Activated CD8-positive, alpha-beta T cell treated with anti-CD3 and anti-CD28 coated beads for 36 hours (primary cell): ENCODE measurements at regions of chr2 and their contacts with region 1.

Region 1: GRCh38 chr2:172131713-172132555 is 29.2 kb upstream of the DLX2 start:
- DNase-seq: no peak
- ATAC-seq: no peak
- H3K4me3 Mint-ChIP-seq: no peak overlapping the region
- H3K27ac Mint-ChIP-seq: no peak overlapping the region
- H3K4me1 Mint-ChIP-seq: no peaks in the 10 kb centered on the region
- H3K27me3 Mint-ChIP-seq: peaks cover 3% of the 10 kb centered on the region
- CTCF ChIP-seq: no peak

Region 2: DNA sequence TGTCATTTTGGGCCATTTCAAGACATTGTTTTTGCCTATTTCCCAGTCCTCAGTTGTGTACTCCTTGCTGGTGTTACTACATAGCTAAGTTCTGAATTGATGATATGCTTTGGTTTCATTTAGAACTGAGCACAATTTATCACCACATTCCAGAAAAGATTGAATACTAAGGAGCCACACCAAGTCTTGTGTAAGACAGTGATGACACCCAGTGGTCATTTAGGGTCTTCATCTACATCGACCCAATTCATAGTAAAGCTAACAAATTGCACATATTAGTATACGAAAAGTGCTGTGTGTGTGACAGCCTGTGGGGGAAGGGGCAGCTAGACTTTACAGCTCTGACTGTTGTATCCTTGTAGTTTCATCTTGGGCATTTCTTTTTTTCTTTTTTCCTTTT is 18.3 kb before region 1 on chr2:
- CTCF ChIA-PET with region 1: interaction called, 23 read pairs
- POLR2A ChIA-PET with region 1: no interaction called
- intact Hi-C with region 1: no loop called
- DNase-seq: no peak
- ATAC-seq: no peak
- H3K4me3 Mint-ChIP-seq: no peak overlapping the region
- H3K27ac Mint-ChIP-seq: no peak overlapping the region
- H3K4me1 Mint-ChIP-seq: no peaks in the 10 kb centered on the region
- H3K27me3 Mint-ChIP-seq: peaks cover 27% of the 10 kb centered on the region
- CTCF ChIP-seq: no peak

Region 3: DNA sequence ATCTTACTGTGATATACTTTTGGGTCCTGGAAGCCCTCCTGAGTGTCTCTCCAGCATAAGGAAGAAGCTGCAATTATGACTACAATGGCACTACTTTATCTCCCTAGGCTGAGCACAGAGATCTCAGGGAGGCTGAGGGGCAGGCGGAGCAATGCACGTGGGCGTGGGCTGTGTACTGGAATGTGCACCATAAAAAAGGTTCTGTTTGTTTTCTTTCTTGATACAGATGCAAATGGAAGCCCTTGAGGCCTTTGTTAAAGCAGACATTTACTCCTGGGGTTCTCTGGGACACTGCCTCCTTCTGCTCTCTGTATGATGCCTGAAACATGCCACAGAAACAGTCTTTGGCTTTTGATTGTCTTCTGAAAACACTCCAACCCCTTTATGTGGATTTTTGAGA is 49.9 kb after region 1 on chr2:
- CTCF ChIA-PET with region 1: no interaction called
- POLR2A ChIA-PET with region 1: no interaction called
- intact Hi-C with region 1: no loop called
- DNase-seq: no peak
- ATAC-seq: no peak
- H3K4me3 Mint-ChIP-seq: no peak overlapping the region
- H3K27ac Mint-ChIP-seq: no peak overlapping the region
- H3K4me1 Mint-ChIP-seq: peaks cover 25% of the 10 kb centered on the region
- H3K27me3 Mint-ChIP-seq: no peaks in the 10 kb centered on the region
- CTCF ChIP-seq: no peak

Region 4: GRCh38 chr2:172226244-172227061 is 94.5 kb after region 1 on chr2:
- CTCF ChIA-PET with region 1: no interaction called
- POLR2A ChIA-PET with region 1: no interaction called
- intact Hi-C with region 1: no loop called
- DNase-seq: peak; percentile 47
- ATAC-seq: peak; percentile 64
- H3K4me3 Mint-ChIP-seq: no peak overlapping the region
- H3K27ac Mint-ChIP-seq: no peak overlapping the region
- H3K4me1 Mint-ChIP-seq: peaks cover 19% of the 10 kb centered on the region
- H3K27me3 Mint-ChIP-seq: no peaks in the 10 kb centered on the region
- CTCF ChIP-seq: peak; percentile 16

Region 5: DNA sequence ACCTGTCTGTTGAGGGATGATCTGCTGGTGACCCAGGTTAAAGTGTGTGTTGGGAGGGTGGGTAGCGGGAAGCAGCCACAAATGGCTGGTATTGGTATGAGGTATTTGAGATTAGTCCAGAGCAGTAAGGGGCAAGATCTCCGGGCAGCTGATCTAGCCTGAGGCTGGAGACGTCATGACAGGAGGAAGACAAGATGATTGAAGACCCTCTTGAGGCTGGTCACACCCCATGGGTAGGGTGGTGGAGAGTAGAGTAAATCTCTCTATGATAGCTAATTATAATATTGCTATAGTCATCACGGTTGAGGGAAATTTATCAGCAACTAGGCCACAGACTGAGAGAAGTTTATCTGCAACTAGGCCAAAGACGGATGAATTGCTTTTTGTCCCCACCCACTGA is 1351.2 kb after region 1 on chr2:
- CTCF ChIA-PET with region 1: no interaction called
- POLR2A ChIA-PET with region 1: no interaction called
- intact Hi-C with region 1: no loop called
- DNase-seq: no peak
- ATAC-seq: no peak
- H3K4me3 Mint-ChIP-seq: no peak overlapping the region
- H3K27ac Mint-ChIP-seq: no peak overlapping the region
- H3K4me1 Mint-ChIP-seq: no peaks in the 10 kb centered on the region
- H3K27me3 Mint-ChIP-seq: peaks cover 4% of the 10 kb centered on the region
- CTCF ChIP-seq: no peak